ENCODE measurements at regions of chr7 and their contacts with region 1.

Region 1: GRCh38 chr7:25894902-25895791 is 256.9 kb upstream of the NFE2L3 start:
- DNase-seq: peak; percentile 81
- ATAC-seq: peak; percentile 63
- H3K4me3 Mint-ChIP-seq: peak overlapping the region; percentile 47
- H3K27ac Mint-ChIP-seq: no peak overlapping the region
- H3K4me1 Mint-ChIP-seq: peaks cover 28% of the 10 kb centered on the region
- H3K27me3 Mint-ChIP-seq: peaks cover 2% of the 10 kb centered on the region

Region 2: DNA sequence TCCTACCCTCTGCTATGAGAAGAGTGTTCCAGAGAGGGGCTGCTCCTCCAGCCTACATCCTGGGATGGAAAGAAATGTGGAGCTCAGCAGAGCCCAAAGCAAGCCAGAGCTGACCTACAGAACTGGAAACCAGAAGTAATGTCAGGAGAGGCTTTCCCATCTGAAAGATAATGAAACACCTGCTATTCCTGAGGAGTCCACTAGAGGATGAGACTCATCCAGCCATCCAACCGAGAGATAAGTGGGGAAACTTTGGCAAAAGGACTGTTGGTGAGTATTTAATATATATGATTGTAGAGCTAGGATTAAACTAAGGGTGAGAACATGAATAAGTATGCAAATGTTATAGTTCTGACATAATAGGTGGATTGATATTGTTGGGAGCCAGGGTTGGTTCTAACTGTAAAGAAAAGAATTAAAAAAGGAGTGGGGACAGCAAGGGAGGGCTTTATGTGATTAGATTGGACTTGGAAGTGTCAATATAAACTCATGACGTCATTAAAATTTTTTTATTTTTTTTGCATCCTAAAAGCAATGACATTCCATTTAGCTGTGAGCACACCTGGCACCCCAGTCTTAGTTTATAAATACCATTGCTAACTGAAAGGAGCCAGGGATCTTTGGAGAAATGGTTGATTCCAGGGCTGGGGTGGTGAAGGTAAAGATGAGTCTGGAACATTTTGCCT is 55.9 kb before region 1 on chr7:
- CTCF ChIA-PET with region 1: no interaction called
- POLR2A ChIA-PET with region 1: no interaction called
- intact Hi-C with region 1: no loop called
- DNase-seq: no peak
- ATAC-seq: no peak
- H3K4me3 Mint-ChIP-seq: no peak overlapping the region
- H3K27ac Mint-ChIP-seq: no peak overlapping the region
- H3K4me1 Mint-ChIP-seq: no peaks in the 10 kb centered on the region
- H3K27me3 Mint-ChIP-seq: peaks cover 27% of the 10 kb centered on the region

Region 3: DNA sequence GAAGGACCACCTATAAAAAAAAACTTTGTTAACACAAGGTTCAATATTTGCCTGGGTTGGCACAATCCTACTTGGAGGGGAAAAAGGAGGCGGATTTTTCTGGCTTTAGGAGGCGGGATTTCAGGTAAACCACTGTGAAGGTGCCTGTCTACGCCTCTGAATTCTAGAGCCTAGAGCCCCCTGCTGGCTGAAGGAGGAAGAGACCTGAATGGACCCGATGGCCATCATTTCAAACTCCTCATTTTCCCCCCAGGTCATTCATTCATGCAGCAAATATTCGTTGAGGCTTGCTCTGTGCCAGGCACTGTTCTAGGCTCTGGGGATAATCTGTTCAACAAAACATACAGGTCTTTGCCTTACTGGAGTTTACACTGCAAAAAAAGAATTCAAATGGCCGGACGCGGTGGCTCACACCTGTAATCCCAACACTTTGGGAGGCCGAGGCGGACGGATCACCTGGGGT is 166.6 kb after region 1 on chr7:
- CTCF ChIA-PET with region 1: interaction called, 52 read pairs
- POLR2A ChIA-PET with region 1: no interaction called
- intact Hi-C with region 1: loop called (anchors 1 kb)
- DNase-seq: peak; percentile 85
- ATAC-seq: peak; percentile 94
- H3K4me3 Mint-ChIP-seq: no peak overlapping the region
- H3K27ac Mint-ChIP-seq: no peak overlapping the region
- H3K4me1 Mint-ChIP-seq: peaks cover 3% of the 10 kb centered on the region
- H3K27me3 Mint-ChIP-seq: peaks cover 16% of the 10 kb centered on the region

Region 4: DNA sequence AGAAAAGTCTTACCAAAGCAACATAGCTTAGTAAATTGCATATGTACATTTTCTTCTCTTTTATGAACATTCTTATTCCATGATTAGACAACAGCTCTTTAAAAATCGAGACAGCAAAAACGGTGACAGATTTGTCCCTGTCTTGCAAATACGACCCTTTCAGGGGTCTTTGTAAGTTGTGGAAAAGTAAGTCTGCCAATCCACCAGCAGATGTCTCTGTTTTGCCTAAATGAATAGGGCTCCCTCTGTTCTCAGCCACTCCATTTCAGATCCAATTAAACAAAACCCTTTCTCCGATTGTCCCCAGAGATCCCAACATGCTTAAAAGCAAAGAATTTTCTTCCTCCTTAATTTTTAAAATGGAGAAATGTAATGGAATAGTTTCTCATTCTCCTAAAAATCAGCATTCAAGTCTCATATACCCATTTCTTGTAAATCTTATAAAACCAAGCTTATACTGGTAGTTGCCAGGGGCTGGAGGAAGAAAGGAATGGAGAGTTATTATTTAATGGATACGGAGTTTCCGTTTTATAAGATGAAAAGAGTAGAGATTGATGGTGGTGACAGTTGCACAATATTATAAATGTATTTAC is 195.9 kb after region 1 on chr7:
- CTCF ChIA-PET with region 1: interaction called, 13 read pairs
- POLR2A ChIA-PET with region 1: interaction called, 3 read pairs
- intact Hi-C with region 1: no loop called
- DNase-seq: no peak
- ATAC-seq: peak; percentile 71
- H3K4me3 Mint-ChIP-seq: no peak overlapping the region
- H3K27ac Mint-ChIP-seq: peak overlapping the region; percentile 1
- H3K4me1 Mint-ChIP-seq: peaks cover 20% of the 10 kb centered on the region
- H3K27me3 Mint-ChIP-seq: no peaks in the 10 kb centered on the region

Region 5: GRCh38 chr7:26200444-26201246 is 305.5 kb after region 1 on chr7 and contains the start of gene HNRNPA2B1:
- CTCF ChIA-PET with region 1: interaction called, 16 read pairs
- POLR2A ChIA-PET with region 1: interaction called, 4 read pairs
- intact Hi-C with region 1: loop called in 1 of 2 experiments (anchors 1 kb)
- DNase-seq: peak; percentile 97
- ATAC-seq: peak; percentile 71
- H3K4me3 Mint-ChIP-seq: peak within 1 kb of the TSS; percentile 100
- H3K27ac Mint-ChIP-seq: peak within 1 kb of the TSS; percentile 100
- H3K4me1 Mint-ChIP-seq: peaks cover 36% of the 10 kb centered on the region
- H3K27me3 Mint-ChIP-seq: no peaks in the 10 kb centered on the region
- total RNA-seq, gene HNRNPA2B1: 600 to 996 TPM

Region 6: GRCh38 chr7:26500749-26501352 is 605.7 kb after region 1 on chr7:
- CTCF ChIA-PET with region 1: no interaction called
- POLR2A ChIA-PET with region 1: no interaction called
- intact Hi-C with region 1: loop called (anchors 2 to 10 kb)
- DNase-seq: no peak
- ATAC-seq: no peak
- H3K4me3 Mint-ChIP-seq: no peak overlapping the region
- H3K27ac Mint-ChIP-seq: no peak overlapping the region
- H3K4me1 Mint-ChIP-seq: no peaks in the 10 kb centered on the region
- H3K27me3 Mint-ChIP-seq: peaks cover 3% of the 10 kb centered on the region